Right ventricle myocardium superior (tissue), 1 donor: ENCODE measurements at regions of chr3 and their contacts with region 1.

Region 1: GRCh38 chr3:192467230-192468140 is 259.9 kb downstream of the FGF12 start:
- DNase-seq: peak; percentile 42
- ATAC-seq: peak; percentile 79

Region 2: GRCh38 chr3:192237992-192238608 is 229.4 kb before region 1 on chr3:
- intact Hi-C with region 1: no loop called
- DNase-seq: no peak
- ATAC-seq: no peak

Region 3: GRCh38 chr3:192553707-192554106 is 86.2 kb after region 1 on chr3:
- intact Hi-C with region 1: loop called (anchors 10 kb)
- DNase-seq: no peak
- ATAC-seq: no peak

Region 4: DNA sequence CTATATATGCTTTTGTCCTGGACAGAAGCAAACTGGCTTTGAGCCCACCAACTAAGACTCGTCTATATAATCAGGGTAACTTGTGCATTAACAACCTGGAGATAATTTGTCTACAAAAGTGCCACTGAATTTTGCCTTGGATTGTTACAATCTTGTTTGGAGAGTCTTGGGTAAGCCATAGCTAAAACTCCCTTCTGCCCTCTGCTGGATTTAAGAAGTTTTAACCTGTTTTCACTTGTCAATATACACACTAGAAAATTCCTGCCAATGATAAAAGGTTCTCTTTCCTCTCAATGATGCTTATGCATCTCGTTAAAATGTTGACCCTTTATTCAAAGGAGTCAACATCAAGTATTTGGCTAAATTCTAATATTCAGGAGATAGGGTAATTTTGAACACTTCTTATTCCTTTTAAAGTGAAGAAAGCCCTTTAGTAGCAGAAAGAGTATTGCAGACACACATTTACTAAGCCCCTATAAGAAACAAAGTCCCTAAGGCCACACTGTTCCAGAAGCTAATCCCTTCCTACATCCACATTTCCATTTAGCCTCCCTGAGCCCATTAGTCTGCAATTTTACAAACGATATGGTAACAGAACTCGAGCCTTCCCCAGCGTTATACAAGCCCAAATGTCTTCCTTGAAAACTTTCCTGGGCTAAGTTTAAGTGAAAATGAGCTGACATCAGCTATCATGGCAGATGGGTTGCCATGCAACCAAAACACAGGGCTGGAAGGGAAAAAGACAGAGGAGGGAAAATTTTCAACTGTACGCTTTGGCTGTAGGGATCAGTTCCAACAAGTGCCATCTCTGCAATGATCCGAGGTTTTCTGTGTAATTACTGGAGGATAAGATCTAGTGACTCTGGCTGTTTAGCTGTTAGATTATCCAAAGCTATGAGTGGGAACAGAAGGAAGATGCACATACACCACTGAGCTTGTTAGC is 335.7 kb after region 1 on chr3:
- intact Hi-C with region 1: loop called (anchors 5 kb)
- DNase-seq: no peak
- ATAC-seq: peak; percentile 78